PC-9 (cell line): ENCODE measurements at regions of chr6 and their contacts with region 1.

Region 1: DNA sequence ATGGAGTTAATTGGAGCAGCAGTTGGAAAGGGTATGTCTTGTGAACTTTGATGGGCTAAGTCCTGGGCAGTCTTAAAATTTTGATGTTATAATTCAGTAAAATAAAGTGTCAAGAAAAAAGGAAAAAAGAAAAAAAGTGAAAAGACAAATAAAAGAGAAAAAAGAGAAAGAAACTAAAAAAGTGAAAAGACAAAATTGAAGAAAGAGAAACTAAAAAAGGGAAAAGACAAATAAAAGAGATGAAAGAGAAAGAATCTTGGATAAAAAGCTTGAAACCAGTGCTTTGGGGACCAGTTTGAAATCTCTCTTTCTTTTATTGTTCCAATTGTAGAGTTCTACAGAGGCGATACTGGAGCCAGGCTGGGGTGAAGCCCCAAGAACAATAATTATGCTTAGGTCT is 12.0 kb upstream of the PGK2 start:
- DNase-seq: no peak
- H3K4me3 ChIP-seq: no peak overlapping the region
- H3K27ac ChIP-seq: no peak overlapping the region
- H3K4me1 ChIP-seq: no peaks in the 10 kb centered on the region
- H3K27me3 ChIP-seq: no peaks in the 10 kb centered on the region
- CTCF ChIP-seq: no peak

Region 2: GRCh38 chr6:49787180-49787579 is 11.9 kb before region 1 on chr6 and contains the start of gene PGK2:
- CTCF ChIA-PET with region 1: no interaction called
- POLR2A ChIA-PET with region 1: interaction called, 11 read pairs
- intact Hi-C with region 1: no loop called
- DNase-seq: peak in 1 of 2 experiments; percentile 14
- H3K4me3 ChIP-seq: no peak within 1 kb of the TSS
- H3K27ac ChIP-seq: no peak within 1 kb of the TSS
- H3K4me1 ChIP-seq: no peaks in the 10 kb centered on the region
- H3K27me3 ChIP-seq: no peaks in the 10 kb centered on the region
- CTCF ChIP-seq: no peak
- total RNA-seq, gene PGK2: not detected in 2 replicates